CD4-positive, alpha-beta T cell (primary cell): ENCODE measurements at regions of chr1 and their contacts with region 1.

Region 1: DNA sequence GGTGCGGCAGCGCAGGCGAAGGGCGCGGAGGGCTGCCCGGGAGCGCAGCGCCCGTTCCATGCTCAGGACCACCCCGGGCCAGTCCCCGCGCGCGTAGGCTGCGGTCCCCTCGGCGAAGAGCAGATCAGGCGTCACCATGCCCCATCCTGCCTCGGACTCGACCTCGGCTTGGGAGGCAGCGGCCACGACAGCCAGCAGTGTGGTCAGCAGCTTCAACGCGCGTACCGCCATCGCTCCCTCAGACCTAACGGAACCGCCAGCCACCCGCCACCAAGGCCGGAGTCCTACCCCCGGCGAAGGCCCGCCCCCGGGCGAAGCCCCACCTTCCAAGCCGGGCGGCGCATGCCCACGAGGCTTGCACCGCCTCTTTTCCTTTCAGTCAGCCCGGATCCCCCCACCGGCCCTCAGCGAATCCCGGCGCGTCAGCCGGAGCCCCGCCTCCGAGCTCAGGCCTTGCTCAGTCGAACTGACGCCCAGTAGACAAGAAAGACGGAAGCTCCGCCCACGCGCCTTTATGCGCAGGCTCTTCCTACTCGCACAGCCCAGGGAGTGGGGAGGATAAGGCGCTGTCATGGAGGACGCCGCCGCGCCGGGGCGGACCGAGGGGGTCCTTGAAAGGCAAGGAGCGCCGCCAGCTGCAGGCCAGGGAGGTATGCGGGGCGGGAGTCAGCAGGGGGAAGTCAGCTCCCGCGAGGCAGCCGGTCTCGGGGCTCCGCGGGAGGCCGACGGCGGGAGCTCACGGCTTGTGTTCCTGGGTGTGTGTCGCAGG is at the starts of genes C1orf50 and P3H1:
- DNase-seq: peak; percentile 98 to 100 (median 99)
- ATAC-seq: peak; percentile 92
- H3K4me3 ChIP-seq: peak within 1 kb of the TSS; percentile 86
- H3K4me3 Mint-ChIP-seq: no peak within 1 kb of the TSS
- H3K27ac ChIP-seq: peak within 1 kb of the TSS; percentile 49 to 78
- H3K27ac Mint-ChIP-seq: no peak within 1 kb of the TSS
- H3K4me1 ChIP-seq: peaks cover 47% of the 10 kb centered on the region
- H3K4me1 Mint-ChIP-seq: peaks cover 35% of the 10 kb centered on the region
- H3K27me3 ChIP-seq: no peaks in the 10 kb centered on the region
- H3K27me3 Mint-ChIP-seq: no peaks in the 10 kb centered on the region
- CTCF ChIP-seq: no peak
- total RNA-seq, gene C1orf50: 23.1 to 23.9 TPM
- total RNA-seq, gene P3H1: 17.6 to 20.9 TPM

Region 2: DNA sequence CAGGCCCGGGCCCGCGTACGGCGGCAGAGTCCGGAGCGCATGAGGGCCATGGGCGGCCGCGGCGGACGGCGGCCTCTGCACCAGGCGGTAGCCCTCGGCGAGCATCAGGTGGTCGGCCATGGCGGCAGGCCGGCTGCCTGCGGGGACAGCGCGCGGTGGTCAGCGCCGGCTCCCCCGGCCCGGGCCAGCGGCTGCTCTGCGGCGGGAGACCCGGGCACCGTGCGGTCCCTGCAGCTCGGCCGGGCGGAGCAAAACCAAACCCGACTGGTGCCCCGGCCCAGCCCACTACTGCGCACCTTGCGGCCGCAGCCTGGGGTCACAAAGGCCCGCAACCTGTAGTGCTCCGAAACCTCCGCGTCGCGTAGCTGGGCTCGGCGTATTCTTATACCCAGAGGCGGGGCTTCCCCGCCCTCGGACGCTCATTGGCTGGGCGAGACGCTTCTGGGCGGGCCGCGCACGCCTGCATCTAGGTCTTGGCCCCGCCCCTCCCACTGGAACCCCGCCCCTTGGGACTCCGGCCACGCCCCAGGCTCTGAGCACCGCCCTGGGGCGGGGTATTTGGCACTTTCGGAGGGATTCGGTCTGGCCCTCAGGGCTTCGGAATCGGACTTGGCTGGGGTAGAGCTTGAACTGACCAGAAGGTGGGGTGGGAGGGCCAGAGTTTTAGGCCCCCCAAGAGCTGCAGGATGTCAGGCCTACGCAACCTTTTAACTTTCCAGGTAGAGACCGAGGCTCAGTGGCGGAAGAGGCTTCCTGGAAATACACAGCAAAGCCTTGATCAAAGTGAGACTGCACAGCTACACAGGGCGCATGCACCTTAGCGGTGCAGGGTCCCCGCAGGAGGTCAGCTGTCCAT is 1904.7 kb before region 1 on chr1 and contains the start of gene CITED4:
- CTCF ChIA-PET with region 1: no interaction called
- POLR2A ChIA-PET with region 1: no interaction called
- intact Hi-C with region 1: loop called in 1 of 2 experiments (anchors 5 kb)
- DNase-seq: peak; percentile 93 to 99 (median 97)
- ATAC-seq: peak; percentile 94
- H3K4me3 ChIP-seq: peak within 1 kb of the TSS; percentile 82
- H3K4me3 Mint-ChIP-seq: peak within 1 kb of the TSS; percentile 95
- H3K27ac ChIP-seq: peak within 1 kb of the TSS; percentile 45 to 67
- H3K27ac Mint-ChIP-seq: peak within 1 kb of the TSS; percentile 96
- H3K4me1 ChIP-seq: peaks cover 20% of the 10 kb centered on the region
- H3K4me1 Mint-ChIP-seq: peaks cover 24% of the 10 kb centered on the region
- H3K27me3 ChIP-seq: no peaks in the 10 kb centered on the region
- H3K27me3 Mint-ChIP-seq: no peaks in the 10 kb centered on the region
- CTCF ChIP-seq: no peak
- total RNA-seq, gene CITED4: 51.6 to 52.0 TPM

Region 3: DNA sequence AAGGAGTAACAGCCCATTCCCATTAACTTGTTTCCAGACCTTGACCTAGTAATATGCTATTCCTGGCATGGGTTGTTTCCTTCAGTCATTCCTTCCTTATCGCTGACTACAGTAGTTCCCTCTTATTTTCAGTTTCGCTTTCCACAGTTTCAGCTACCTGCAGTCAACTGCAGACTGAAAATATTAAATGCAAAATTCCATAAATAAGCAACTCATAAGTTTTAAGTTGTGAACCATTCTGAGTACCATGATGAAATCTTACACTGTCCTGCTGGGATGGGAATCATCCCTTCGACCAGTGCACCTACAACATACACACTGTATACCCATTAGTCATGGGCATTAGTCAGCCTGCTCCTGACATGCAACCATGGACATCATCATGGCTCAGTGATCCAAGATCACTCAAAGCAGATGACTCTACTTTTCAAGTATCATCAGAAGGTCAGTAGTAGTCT is 237.2 kb before region 1 on chr1:
- CTCF ChIA-PET with region 1: no interaction called
- POLR2A ChIA-PET with region 1: no interaction called
- intact Hi-C with region 1: no loop called
- DNase-seq: peak in 4 of 14 experiments; percentile 16 to 60 (median 40)
- ATAC-seq: no peak
- H3K4me3 ChIP-seq: peak overlapping the region; percentile 54
- H3K4me3 Mint-ChIP-seq: peak overlapping the region; percentile 87
- H3K27ac ChIP-seq: no peak overlapping the region
- H3K27ac Mint-ChIP-seq: peak overlapping the region; percentile 65
- H3K4me1 ChIP-seq: peaks cover 5% of the 10 kb centered on the region
- H3K4me1 Mint-ChIP-seq: peaks cover 9% of the 10 kb centered on the region
- H3K27me3 ChIP-seq: no peaks in the 10 kb centered on the region
- H3K27me3 Mint-ChIP-seq: no peaks in the 10 kb centered on the region
- CTCF ChIP-seq: no peak

Region 4: GRCh38 chr1:42657971-42658879 is 108.7 kb before region 1 on chr1 and contains the start of gene PPIH:
- CTCF ChIA-PET with region 1: interaction called, 3 read pairs
- POLR2A ChIA-PET with region 1: interaction called, 24 read pairs
- intact Hi-C with region 1: loop called in 1 of 2 experiments (anchors 1 kb)
- DNase-seq: peak; percentile 87 to 97 (median 94)
- ATAC-seq: peak; percentile 98
- H3K4me3 ChIP-seq: peak within 1 kb of the TSS; percentile 94
- H3K4me3 Mint-ChIP-seq: peak within 1 kb of the TSS; percentile 95
- H3K27ac ChIP-seq: peak within 1 kb of the TSS; percentile 68 to 77
- H3K27ac Mint-ChIP-seq: peak within 1 kb of the TSS; percentile 88
- H3K4me1 ChIP-seq: peaks cover 18% of the 10 kb centered on the region
- H3K4me1 Mint-ChIP-seq: peaks cover 50% of the 10 kb centered on the region
- H3K27me3 ChIP-seq: no peaks in the 10 kb centered on the region
- H3K27me3 Mint-ChIP-seq: no peaks in the 10 kb centered on the region
- CTCF ChIP-seq: no peak
- total RNA-seq, gene PPIH: 29.4 to 32.6 TPM

Region 5: DNA sequence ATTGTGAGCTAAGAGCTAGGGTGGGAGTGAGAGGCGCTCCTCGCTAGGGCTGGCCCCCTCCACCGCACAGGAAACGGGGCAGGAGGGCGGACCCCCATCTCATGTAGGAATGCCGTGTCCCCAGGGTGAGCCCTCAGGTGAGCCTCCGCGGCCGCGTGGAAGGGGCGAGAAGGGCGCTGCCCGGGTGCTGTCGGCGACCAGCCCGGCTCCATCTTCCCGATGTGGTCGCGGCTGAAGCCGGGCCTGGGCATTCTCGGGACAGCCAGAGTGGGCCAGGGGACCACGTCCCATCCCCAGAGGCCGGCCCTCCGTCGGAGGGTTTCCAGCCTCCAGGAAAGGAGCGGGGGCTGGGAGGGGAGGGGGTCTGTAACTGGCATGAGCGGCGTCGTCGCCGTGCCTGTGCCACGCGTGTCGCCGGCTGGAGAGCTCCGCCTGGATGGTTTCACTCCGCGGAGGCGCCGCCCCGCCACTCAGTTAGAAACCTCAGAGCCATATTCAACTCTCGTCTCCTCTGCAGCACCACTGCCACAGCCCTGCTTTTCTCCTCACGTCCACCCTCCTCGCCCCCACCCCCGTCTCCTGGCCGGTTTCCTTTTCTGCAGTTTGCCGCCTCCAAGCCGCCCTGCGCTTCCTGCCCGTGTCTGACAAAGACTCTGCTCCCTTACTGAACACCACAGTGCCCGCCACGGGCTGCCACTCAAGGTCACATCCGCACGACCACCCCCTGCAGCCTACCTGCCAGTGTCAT is 18.2 kb after region 1 on chr1 and contains the start of gene TMEM269:
- CTCF ChIA-PET with region 1: interaction called, 3 read pairs
- POLR2A ChIA-PET with region 1: interaction called, 28 read pairs
- intact Hi-C with region 1: no loop called
- DNase-seq: peak; percentile 20 to 62 (median 46)
- ATAC-seq: peak; percentile 91
- H3K4me3 ChIP-seq: peak within 1 kb of the TSS; percentile 61
- H3K4me3 Mint-ChIP-seq: peak within 1 kb of the TSS; percentile 89
- H3K27ac ChIP-seq: no peak within 1 kb of the TSS
- H3K27ac Mint-ChIP-seq: peak within 1 kb of the TSS; percentile 49
- H3K4me1 ChIP-seq: peaks cover 16% of the 10 kb centered on the region
- H3K4me1 Mint-ChIP-seq: peaks cover 21% of the 10 kb centered on the region
- H3K27me3 ChIP-seq: no peaks in the 10 kb centered on the region
- H3K27me3 Mint-ChIP-seq: no peaks in the 10 kb centered on the region
- CTCF ChIP-seq: no peak
- total RNA-seq, gene TMEM269: 0.60 to 1.1 TPM

Region 6: DNA sequence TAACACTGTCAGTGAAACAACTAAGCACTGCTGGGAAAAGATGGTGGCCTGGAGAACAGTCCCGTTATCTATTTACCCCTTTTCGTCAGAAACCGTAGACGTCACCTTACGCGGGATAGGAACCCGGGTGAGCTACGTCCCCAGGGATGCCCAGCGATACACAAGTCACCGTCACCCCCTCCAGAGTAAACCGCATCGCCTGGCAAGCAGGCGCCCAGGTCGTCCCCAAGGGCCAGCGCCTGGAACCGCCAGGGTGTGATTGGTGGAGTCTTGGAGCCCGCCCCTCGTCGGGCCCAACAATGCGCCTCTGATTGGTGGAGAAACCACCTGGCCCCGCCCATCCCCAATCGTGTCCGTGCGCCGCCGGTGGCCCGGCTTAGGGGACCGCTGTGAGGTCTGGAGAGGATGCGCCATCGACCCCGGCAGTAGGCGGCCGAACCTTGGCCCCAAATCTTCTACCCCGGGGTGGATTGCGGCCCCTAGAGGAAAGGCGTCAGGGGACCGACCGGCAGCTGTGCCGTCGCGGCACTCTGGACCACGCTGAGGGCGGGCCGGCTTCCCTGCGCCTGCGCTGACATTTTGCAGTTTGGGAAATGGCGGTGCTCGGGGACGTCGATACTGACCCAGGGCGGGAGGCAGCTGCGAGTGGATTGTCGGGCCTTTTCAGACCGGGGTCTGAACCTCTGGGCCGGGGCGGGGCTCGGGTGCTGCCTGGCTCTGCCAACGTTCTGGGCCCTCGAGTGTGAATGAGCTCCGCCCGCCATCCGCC is 157.3 kb after region 1 on chr1:
- CTCF ChIA-PET with region 1: interaction called, 9 read pairs
- POLR2A ChIA-PET with region 1: interaction called, 23 read pairs
- intact Hi-C with region 1: loop called in 1 of 2 experiments (anchors 5 kb)
- DNase-seq: peak; percentile 81 to 94 (median 88)
- ATAC-seq: peak; percentile 89
- H3K4me3 ChIP-seq: peak overlapping the region; percentile 81
- H3K4me3 Mint-ChIP-seq: peak overlapping the region; percentile 94
- H3K27ac ChIP-seq: peak overlapping the region; percentile 66 to 86
- H3K27ac Mint-ChIP-seq: peak overlapping the region; percentile 84
- H3K4me1 ChIP-seq: peaks cover 22% of the 10 kb centered on the region
- H3K4me1 Mint-ChIP-seq: peaks cover 40% of the 10 kb centered on the region
- H3K27me3 ChIP-seq: no peaks in the 10 kb centered on the region
- H3K27me3 Mint-ChIP-seq: no peaks in the 10 kb centered on the region
- CTCF ChIP-seq: no peak

Region 7: DNA sequence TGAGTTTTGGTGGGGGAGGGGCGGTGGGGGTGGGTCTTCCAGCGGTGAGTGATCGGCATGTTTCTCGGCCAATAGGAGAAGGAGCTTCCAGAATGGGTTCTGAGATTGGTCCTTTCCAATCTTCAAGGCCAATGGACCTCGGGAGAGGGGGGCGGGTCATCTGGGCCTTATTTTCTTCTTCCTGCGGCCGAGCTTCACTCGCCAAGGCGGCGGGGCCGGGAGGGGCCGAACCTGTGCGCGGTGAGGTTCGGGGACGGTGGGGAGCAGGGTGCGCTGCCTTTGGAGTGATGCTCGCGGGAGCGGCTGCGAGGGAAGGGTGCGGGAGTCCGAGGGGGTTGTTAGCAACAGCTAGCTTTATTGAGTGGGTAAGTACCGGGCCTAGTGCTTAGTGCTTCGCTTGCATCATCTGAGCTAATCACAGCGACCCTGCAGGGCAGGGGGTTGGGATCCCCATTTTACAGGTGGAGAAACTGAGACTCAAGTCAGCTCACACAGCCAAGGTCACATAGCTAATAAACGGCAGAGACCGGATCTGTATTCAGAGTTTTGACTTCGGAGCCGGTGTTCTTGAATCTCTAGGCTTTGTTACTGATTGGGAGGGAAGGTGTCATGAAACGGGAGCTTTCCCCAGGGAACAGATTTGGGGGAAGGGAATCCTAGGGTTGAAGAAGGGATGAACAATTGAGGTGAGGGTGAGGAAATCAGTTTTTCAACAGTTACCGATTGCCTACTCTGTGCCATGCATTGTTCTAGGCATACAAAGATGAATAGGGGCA is 883.6 kb after region 1 on chr1:
- CTCF ChIA-PET with region 1: no interaction called
- POLR2A ChIA-PET with region 1: no interaction called
- intact Hi-C with region 1: loop called in 1 of 2 experiments (anchors 5 kb)
- DNase-seq: peak in 13 of 14 experiments; percentile 78 to 96 (median 86)
- ATAC-seq: peak; percentile 71
- H3K4me3 ChIP-seq: peak overlapping the region; percentile 91
- H3K4me3 Mint-ChIP-seq: peak overlapping the region; percentile 98
- H3K27ac ChIP-seq: peak overlapping the region; percentile 75 to 79
- H3K27ac Mint-ChIP-seq: peak overlapping the region; percentile 90
- H3K4me1 ChIP-seq: peaks cover 32% of the 10 kb centered on the region
- H3K4me1 Mint-ChIP-seq: peaks cover 41% of the 10 kb centered on the region
- H3K27me3 ChIP-seq: no peaks in the 10 kb centered on the region
- H3K27me3 Mint-ChIP-seq: no peaks in the 10 kb centered on the region
- CTCF ChIP-seq: no peak